OCI-LY7 (cell line): ENCODE measurements at regions of chr4 and their contacts with region 1.

Region 1: DNA sequence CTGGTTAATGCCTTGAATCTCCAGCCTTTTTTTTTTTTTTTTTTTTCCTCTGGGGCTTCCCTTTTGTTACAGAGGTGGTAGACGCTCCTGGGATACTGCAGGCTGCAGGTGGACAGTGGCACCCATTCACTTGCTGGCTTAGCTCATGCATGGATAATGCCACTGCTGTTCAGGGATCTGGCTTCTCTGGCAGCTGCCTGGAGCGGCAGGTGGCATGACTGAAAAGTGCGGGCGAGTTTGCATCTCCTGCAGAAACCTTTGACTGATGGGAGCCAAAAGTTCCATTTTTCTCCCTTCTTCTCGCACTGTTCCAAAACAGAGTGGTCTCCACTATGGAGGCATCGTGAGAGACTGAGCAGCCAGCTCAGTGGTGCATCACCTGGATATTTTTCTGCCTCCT is 5.9 kb upstream of the STIM2 start:
- DNase-seq: no peak
- H3K4me3 ChIP-seq: no peak overlapping the region
- H3K27ac ChIP-seq: no peak overlapping the region
- H3K4me1 ChIP-seq: peaks cover 28% of the 10 kb centered on the region
- CTCF ChIP-seq: no peak

Region 2: GRCh38 chr4:25807102-25807728 is 1047.5 kb before region 1 on chr4:
- CTCF ChIA-PET with region 1: no interaction called
- POLR2A ChIA-PET with region 1: no interaction called
- intact Hi-C with region 1: no loop called
- DNase-seq: no peak
- H3K4me3 ChIP-seq: no peak overlapping the region
- H3K27ac ChIP-seq: no peak overlapping the region
- H3K4me1 ChIP-seq: no peaks in the 10 kb centered on the region
- CTCF ChIP-seq: no peak

Region 3: DNA sequence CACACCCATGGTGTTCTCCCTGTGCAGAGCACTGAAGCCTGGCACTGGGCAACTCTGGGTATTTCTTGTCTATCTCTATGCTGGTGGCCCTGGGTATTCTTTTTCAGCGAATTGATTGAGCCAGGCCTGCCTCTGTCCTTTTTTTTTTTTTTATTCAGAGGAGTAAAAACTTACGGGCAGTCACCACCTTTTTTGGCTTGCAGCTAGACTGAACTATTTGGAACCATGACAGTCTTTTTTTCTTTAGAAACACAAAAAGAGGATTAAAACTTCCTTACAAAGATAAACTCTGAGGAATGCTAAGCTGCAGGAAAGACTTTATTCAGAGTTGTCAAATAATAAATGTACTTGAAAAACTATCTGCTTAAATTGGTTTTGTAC is 113.2 kb before region 1 on chr4:
- CTCF ChIA-PET with region 1: no interaction called
- POLR2A ChIA-PET with region 1: no interaction called
- intact Hi-C with region 1: no loop called
- DNase-seq: no peak
- H3K4me3 ChIP-seq: no peak overlapping the region
- H3K27ac ChIP-seq: no peak overlapping the region
- H3K4me1 ChIP-seq: no peaks in the 10 kb centered on the region
- CTCF ChIP-seq: no peak

Region 4: DNA sequence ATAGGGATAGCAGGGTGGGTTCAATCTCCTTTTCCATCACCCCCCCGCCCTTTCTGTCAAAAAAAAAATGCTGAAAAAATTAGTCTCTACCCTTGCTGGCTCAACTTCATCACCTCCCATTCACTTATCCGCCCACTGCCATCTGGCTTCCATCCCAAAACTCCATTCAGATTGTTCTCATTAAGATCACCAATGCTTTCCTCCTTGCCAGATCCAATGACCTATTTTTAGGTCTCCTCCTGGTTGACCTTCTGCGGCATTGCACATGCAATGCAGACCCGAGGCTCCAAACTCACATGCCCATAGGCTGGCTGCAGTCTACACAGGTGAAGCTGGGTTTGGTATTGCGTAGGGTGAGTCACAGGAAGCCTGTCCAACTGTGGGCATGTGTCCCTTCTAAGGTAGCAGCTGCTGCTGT is 15.2 kb before region 1 on chr4:
- CTCF ChIA-PET with region 1: interaction called, 3 read pairs
- POLR2A ChIA-PET with region 1: interaction called, 440 read pairs
- intact Hi-C with region 1: no loop called
- DNase-seq: no peak
- H3K4me3 ChIP-seq: no peak overlapping the region
- H3K27ac ChIP-seq: no peak overlapping the region
- H3K4me1 ChIP-seq: peaks cover 59% of the 10 kb centered on the region
- CTCF ChIP-seq: no peak